Heart left ventricle (tissue), 16 donors: ENCODE measurements at regions of chr15 and their contacts with region 1.

Region 1: DNA sequence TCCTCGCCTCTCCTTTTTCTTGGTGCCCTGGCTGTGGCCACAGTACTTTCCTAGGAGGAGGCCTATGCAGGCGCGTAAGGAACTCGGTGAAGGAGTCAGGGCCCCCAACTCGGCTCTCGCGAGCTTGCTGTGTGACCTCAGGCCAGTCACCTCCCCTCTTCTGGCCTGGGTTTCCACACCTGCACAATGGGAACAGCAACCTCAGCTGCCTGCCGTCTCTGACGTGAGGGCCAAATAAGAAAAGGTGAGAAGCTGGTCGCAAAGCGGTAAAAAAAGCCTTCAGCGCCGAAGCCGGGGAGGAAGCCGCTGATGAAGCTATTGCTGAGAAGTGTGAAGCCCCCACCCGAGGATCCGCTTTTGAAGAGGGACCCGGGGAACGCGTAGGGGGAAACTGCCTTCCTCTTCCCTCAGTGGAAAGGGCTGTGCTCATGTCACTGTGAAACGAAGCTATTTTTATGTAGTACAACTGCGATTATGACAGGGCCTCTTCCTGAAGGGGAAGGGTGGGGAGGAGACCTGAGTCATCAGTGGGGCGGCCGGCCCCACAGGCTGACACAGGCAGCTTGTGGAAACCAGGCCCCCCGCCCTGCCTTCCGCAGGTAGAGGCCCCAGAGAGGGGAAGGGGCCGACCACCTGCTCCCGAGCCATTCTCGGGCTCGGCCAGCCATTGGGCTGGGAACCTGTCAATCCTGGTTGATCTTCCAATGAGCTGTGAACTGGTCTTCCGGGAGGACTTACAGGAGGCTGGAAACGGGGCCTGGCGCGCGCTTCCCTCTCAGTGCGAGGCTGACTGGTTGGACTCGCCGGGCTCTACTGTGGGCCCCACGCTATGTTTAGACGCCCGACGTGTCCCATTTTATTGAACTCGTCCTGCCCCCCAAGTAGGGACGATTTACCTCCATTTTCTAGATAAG is 18.0 kb upstream of the ANKDD1A start:
- DNase-seq: peak; percentile 96 to 97 (median 97)
- ATAC-seq: peak; percentile 75 to 91 (median 84)
- H3K4me3 ChIP-seq: peak overlapping the region in 10 of 12 donors; percentile 20 to 52 (median 38)
- H3K27ac ChIP-seq: peak overlapping the region; percentile 68 to 99 (median 88)
- H3K4me1 ChIP-seq: peaks cover 20 to 79% (median 51%) of the 10 kb centered on the region in 12 donors
- H3K27me3 ChIP-seq: no peaks in the 10 kb centered on the region
- CTCF ChIP-seq: no peak
- POLR2A ChIP-seq: peak in 1 of 2 donors; percentile 64

Region 2: DNA sequence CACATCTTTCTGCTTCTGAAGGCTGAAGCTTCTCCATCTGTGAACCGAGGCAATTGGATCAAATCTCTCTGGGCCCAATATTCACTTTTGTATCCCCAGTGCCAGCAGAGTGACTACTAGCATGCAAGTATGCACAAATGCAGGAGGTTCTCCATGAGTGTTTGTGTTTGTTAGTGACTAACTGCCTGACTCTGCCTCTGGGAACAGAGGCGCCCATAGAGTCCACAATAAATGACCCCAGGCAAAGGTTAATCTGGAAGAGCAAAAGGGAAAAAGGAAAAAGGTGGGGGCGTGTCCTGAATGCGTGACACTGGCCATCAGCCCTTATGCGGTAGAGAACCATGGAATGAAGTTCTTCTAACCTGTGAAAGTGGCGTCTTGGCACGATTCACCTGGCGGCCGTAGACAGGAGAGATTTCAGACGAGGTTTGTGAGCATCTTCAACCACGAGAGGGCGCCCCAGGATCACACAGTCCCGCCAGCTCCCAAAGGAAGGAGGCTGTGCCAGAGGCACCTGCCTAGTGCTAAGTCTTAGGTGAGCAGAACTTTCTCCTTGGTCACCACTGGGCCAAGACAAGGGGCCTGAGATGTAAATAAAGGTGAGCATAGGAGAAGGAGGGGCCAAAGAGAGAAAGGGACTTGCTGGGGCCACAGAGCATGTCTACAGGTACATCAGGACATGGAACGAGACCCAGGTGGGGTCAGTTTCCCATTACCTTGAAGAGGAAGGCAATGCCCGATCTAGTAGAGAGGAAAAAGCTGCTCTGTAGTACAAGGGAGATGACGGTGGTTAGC is 162.5 kb before region 1 on chr15:
- intact Hi-C with region 1: loop called in 1 of 10 experiments (anchors 5 kb)
- DNase-seq: peak; percentile 81 to 89 (median 83)
- ATAC-seq: peak; percentile 47 to 79 (median 70)
- H3K4me3 ChIP-seq: no peak overlapping the region
- H3K27ac ChIP-seq: peak overlapping the region in 1 of 12 donors; percentile 19
- H3K4me1 ChIP-seq: peaks cover 0 to 14% (median 0%) of the 10 kb centered on the region in 12 donors
- H3K27me3 ChIP-seq: no peaks in the 10 kb centered on the region
- CTCF ChIP-seq: peak; percentile 82 to 96 (median 90)
- POLR2A ChIP-seq: no peak

Region 3: GRCh38 chr15:64841258-64842095 is 52.3 kb before region 1 on chr15 and contains the start of gene PLEKHO2:
- intact Hi-C with region 1: loop called (anchors 2 to 5 kb)
- DNase-seq: peak; percentile 97 to 98 (median 98)
- ATAC-seq: peak; percentile 82 to 92 (median 88)
- H3K4me3 ChIP-seq: peak within 1 kb of the TSS; percentile 86 to 100 (median 97)
- H3K27ac ChIP-seq: peak within 1 kb of the TSS; percentile 89 to 98 (median 96)
- H3K4me1 ChIP-seq: peaks cover 6 to 64% (median 36%) of the 10 kb centered on the region in 12 donors
- H3K27me3 ChIP-seq: no peaks in the 10 kb centered on the region
- CTCF ChIP-seq: peak in 4 of 12 donors; percentile 19 to 39 (median 32)
- POLR2A ChIP-seq: peak in 1 of 2 donors; percentile 89
- total RNA-seq, gene PLEKHO2: 7.0 to 50.8 (median 9.2) TPM